Right ventricle myocardium inferior (tissue), 1 donor: ENCODE measurements at regions of chr17 and their contacts with region 1.

Region 1: DNA sequence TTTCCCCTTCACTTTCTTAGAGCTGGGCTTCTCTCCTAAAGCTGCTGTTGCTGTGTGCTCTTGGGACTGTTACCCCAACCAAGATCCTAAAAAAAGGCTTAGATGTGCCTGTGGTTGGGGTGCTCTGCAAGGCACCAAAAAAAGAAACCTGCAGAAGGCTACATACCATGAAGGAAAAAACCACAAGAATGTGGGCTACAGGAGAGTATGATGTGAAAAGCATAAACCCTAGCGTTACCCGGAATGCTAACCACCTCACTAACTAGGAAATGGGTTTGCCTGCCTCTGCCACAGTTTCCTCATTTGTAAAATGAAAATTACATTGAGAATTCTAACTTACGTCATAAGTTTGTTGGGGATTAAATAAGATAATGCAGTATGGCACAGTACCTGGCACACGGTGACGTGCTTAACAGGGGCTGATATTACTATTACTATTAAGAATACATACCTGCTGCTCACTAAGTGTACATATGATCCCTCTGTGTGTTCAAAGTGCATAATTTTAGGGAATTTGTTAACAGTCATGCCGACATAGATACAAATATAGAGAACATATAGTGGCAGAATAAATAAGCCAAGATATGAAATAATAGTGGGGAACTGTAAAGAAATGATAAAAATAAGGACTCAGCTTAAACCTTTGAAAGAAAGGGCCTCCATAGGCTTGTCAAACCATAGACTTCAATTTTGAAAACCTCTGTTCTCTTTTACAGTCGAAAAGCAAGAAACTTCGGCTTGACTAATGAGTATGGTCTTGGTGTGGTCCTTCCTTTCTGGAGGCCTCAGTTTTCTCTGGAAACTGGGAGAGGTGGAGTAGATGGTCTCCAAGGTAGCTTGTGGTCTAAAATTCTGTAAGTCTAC is 177.8 kb upstream of the TBX2 start:
- DNase-seq: no peak
- ATAC-seq: no peak

Region 2: DNA sequence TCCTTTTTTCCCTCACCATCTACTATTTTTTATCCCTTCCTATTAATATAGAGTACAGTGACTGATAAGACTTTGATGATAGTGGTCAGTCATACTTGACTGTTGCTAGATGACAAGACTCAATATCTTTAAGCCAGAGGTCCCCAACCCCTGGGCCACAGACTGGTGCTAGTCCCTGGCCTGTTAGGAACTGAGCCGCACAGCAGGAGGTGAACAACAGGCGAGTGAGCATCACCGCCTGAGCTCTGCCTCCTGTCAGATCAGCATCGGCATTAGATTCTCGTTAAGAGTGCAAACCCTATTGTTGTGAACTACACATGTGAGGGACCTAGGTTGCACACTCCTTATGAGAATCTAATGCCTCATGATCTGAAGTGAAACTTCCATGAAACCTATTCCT is 202.9 kb before region 1 on chr17:
- intact Hi-C with region 1: no loop called
- DNase-seq: no peak
- ATAC-seq: no peak

Region 3: GRCh38 chr17:61251939-61252896 is 30.4 kb after region 1 on chr17:
- intact Hi-C with region 1: loop called (anchors 2 kb)
- DNase-seq: peak; percentile 95
- ATAC-seq: peak; percentile 95